ENCODE measurements at regions of chr2 and their contacts with region 1.

Region 1: GRCh38 chr2:219543601-219544358 is at the starts of genes CHPF and TMEM198:
- DNase-seq: peak; percentile 97
- ATAC-seq: peak; percentile 91 to 97 (median 94)
- H3K4me3 ChIP-seq: peak within 1 kb of the TSS; percentile 40 to 92 (median 80)
- H3K27ac ChIP-seq: peak within 1 kb of the TSS; percentile 62 to 93 (median 90)
- H3K4me1 ChIP-seq: peaks cover 4 to 37% (median 32%) of the 10 kb centered on the region in 9 donors
- H3K27me3 ChIP-seq: peaks cover 0 to 59% (median 11%) of the 10 kb centered on the region in 7 donors
- CTCF ChIP-seq: no peak
- total RNA-seq, gene CHPF: 66.5 to 166 (median 95.9) TPM
- total RNA-seq, gene TMEM198: 0.59 to 3.5 (median 1.6) TPM

Region 2: DNA sequence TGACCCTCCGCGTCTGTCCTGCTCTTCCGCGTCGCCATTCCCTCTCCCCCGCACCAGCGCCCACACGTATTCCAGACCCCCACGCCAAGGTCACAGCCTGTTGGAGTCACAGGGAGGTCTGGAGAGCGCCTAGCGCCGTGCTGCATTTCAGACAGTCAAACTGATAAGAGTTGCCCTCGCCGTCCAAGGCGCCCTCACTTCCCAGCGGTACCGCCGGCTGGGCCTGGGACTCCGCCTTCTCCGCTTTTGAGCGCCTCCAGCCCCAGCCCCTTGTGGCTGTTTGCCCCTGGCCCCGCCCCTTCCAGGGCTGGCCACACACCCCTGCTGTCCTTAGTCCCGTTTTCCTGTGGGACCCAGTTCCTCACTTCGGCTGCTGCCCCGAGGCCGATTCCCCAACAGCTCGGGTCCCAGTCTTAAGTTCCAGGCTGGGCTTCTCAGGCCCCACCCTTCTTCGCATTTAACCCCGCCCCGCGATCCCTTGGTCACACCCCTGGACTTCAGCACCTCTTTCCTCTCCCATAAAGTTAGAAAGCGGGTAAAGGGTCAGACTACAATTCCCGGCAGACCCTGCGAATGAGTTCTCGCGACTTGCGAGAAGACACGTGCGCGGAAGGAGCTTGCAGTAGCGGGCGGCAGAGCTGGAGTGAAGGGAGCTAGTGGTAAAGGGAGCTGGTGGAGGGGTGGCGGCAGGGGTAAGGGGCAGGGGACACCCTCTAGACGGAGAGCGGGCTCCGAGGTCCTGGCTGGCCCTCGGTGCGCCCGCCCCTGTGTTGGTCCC is 45.3 kb before region 1 on chr2 and contains the start of gene GMPPA:
- intact Hi-C with region 1: loop called in 1 of 10 experiments (anchors 1 kb)
- DNase-seq: peak; percentile 94 to 97
- ATAC-seq: peak; percentile 87 to 94 (median 90)
- H3K4me3 ChIP-seq: peak within 1 kb of the TSS; percentile 52 to 88 (median 75)
- H3K27ac ChIP-seq: peak within 1 kb of the TSS; percentile 91 to 100 (median 96)
- H3K4me1 ChIP-seq: peaks cover 19 to 50% (median 37%) of the 10 kb centered on the region in 9 donors
- H3K27me3 ChIP-seq: peaks cover 0 to 43% (median 18%) of the 10 kb centered on the region in 7 donors
- CTCF ChIP-seq: peak in 3 of 9 donors; percentile 15 to 29 (median 25)
- total RNA-seq, gene GMPPA: 15.8 to 29.4 (median 21.0) TPM

Region 3: DNA sequence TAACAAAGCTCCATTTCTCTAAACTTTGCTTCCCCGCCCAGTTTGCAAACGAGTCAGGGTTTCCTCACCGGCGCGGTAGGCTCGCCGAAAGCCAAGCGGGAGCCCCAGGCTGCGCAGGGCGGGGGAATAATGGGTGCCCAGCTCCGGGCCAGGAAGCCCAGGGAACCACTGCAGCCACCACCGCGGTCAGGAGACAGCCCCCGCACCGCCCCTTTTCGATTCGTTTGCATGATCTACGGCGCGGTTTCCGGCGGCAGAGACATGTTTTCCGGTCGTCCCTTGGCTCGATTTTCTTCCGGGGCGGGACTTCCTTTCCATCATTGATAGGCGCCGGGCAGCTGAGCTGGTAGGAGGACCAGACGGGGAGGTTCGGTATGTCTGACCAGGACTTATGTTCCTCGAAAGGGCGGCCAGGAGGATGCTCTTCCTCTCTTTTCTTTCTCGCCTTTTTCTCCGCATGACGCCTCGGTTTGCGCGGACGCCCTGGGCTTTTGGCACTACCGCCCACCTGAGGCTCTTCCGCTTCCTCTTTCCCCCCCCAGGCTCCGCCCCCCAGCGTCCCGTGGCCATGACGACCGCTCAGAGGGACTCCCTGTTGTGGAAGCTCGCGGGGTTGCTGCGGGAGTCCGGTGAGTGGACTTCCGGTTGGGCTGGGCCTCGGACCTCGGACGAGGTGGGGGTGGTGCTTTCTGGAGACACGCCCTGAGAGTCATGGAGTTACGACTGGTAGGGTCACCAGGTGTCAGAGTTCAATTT is 54.0 kb after region 1 on chr2 and contains the start of gene STK11IP:
- intact Hi-C with region 1: loop called in 2 of 10 experiments (anchors 2 to 5 kb)
- DNase-seq: peak; percentile 94 to 98
- ATAC-seq: peak; percentile 96 to 99 (median 98)
- H3K4me3 ChIP-seq: peak within 1 kb of the TSS; percentile 46 to 80 (median 70)
- H3K27ac ChIP-seq: peak within 1 kb of the TSS; percentile 87 to 97 (median 94)
- H3K4me1 ChIP-seq: peaks cover 0 to 29% (median 10%) of the 10 kb centered on the region in 9 donors
- H3K27me3 ChIP-seq: no peaks in the 10 kb centered on the region
- CTCF ChIP-seq: no peak
- total RNA-seq, gene STK11IP: 7.2 to 18.2 (median 12.9) TPM

Region 4: DNA sequence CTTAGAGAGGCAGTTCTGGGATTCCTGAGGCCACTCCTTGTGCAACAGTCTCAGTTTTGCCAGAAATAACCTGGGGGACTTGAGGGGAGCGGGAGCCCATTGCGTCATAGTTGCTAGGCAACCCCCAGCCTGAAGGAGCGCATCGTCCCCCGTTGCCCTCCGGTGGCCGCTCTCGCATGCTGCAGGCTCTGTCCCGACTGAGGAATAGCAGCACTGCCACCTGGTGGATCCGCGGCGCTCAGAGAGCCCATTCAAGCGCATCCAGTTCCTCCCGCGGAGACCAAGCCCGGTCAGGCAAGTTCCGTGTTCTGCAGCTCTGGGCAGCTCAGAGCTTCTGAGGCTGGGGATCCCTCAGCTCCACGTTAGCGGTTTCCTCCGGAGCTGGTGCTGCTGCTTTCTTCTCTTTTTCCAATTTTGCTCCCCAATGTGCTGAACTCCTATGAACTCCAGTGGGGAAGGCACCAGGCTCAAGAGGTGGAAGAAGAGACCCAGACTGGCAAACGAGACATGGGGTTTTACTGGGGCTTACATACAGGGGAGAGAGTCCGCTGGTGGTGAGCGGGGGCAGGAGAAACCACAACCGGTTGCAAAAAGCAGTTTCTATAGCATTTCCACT is 98.8 kb after region 1 on chr2:
- intact Hi-C with region 1: loop called in 9 of 10 experiments (anchors 1 to 5 kb)
- DNase-seq: peak; percentile 94 to 95
- ATAC-seq: peak; percentile 51 to 79 (median 65)
- H3K4me3 ChIP-seq: no peak overlapping the region
- H3K27ac ChIP-seq: peak overlapping the region in 9 of 10 donors; percentile 75 to 99 (median 88)
- H3K4me1 ChIP-seq: peaks cover 16 to 88% (median 47%) of the 10 kb centered on the region in 9 donors
- H3K27me3 ChIP-seq: no peaks in the 10 kb centered on the region
- CTCF ChIP-seq: peak; percentile 93 to 100 (median 98)

Region 5: GRCh38 chr2:219701847-219702634 is 158.3 kb after region 1 on chr2:
- intact Hi-C with region 1: loop called in 1 of 10 experiments (anchors 5 kb)
- DNase-seq: peak; percentile 43 to 44
- ATAC-seq: peak; percentile 26 to 69 (median 62)
- H3K4me3 ChIP-seq: no peak overlapping the region
- H3K27ac ChIP-seq: peak overlapping the region in 8 of 10 donors; percentile 13 to 76 (median 50)
- H3K4me1 ChIP-seq: peaks cover 0 to 49% (median 24%) of the 10 kb centered on the region in 9 donors
- H3K27me3 ChIP-seq: peaks cover 0 to 19% (median 0%) of the 10 kb centered on the region in 7 donors
- CTCF ChIP-seq: no peak